ENCODE measurements at regions of chr14 and their contacts with region 1.

Region 1: DNA sequence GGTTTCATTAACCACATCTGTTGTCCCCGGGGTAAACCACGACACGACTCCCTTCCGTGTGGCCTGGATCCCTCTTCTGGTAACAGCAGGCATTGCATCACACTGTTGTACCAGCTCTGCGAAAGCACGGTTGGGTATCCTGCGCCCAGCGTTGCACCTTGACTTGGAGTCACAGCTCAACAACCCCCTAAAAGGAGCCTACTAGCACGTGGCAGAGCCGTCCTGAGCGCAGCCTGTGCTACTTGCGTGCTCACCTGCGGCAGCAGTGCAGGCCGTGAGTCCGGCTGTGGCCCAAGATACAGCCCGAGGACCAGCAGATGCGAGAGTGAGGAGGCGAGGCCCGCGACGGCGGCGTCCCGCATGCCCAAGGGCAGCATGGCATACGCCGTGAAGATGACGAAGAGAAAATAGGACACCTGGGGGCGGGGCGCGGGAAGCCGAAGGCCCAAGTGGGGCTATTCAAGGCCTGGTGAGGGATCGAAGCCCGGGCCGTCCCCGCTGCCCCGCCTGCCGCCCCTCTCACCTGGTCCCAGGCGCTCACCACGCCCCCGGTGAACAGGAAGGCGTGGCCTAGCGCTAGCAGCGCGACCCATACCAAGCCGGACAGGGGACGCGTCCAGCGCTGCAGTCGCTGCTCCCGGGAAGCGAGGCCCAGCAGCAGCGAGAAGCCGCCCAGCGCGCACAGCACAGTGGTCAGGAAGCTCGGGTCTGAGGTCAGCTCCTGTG is 2.4 kb downstream of the ADCY4 start:
- DNase-seq: peak; percentile 92
- H3K4me3 Mint-ChIP-seq: peak overlapping the region; percentile 30
- H3K27ac Mint-ChIP-seq: peak overlapping the region; percentile 74
- H3K4me1 Mint-ChIP-seq: peaks cover 64% of the 10 kb centered on the region
- H3K27me3 Mint-ChIP-seq: peaks cover 38% of the 10 kb centered on the region

Region 2: GRCh38 chr14:24092110-24092504 is 240.3 kb before region 1 on chr14:
- CTCF ChIA-PET with region 1: no interaction called
- POLR2A ChIA-PET with region 1: no interaction called
- DNase-seq: no peak
- H3K4me3 Mint-ChIP-seq: no peak overlapping the region
- H3K27ac Mint-ChIP-seq: peak overlapping the region; percentile 76
- H3K4me1 Mint-ChIP-seq: peaks cover 35% of the 10 kb centered on the region
- H3K27me3 Mint-ChIP-seq: no peaks in the 10 kb centered on the region

Region 3: GRCh38 chr14:24317141-24317928 is 15.1 kb before region 1 on chr14:
- CTCF ChIA-PET with region 1: interaction called, 136 read pairs
- POLR2A ChIA-PET with region 1: no interaction called
- DNase-seq: no peak
- H3K4me3 Mint-ChIP-seq: no peak overlapping the region
- H3K27ac Mint-ChIP-seq: no peak overlapping the region
- H3K4me1 Mint-ChIP-seq: peaks cover 43% of the 10 kb centered on the region
- H3K27me3 Mint-ChIP-seq: peaks cover 8% of the 10 kb centered on the region

Region 4: GRCh38 chr14:24351517-24351916 is 19.1 kb after region 1 on chr14:
- CTCF ChIA-PET with region 1: interaction called, 25 read pairs
- POLR2A ChIA-PET with region 1: no interaction called
- DNase-seq: no peak
- H3K4me3 Mint-ChIP-seq: no peak overlapping the region
- H3K27ac Mint-ChIP-seq: no peak overlapping the region
- H3K4me1 Mint-ChIP-seq: no peaks in the 10 kb centered on the region
- H3K27me3 Mint-ChIP-seq: peaks cover 55% of the 10 kb centered on the region

Region 5: DNA sequence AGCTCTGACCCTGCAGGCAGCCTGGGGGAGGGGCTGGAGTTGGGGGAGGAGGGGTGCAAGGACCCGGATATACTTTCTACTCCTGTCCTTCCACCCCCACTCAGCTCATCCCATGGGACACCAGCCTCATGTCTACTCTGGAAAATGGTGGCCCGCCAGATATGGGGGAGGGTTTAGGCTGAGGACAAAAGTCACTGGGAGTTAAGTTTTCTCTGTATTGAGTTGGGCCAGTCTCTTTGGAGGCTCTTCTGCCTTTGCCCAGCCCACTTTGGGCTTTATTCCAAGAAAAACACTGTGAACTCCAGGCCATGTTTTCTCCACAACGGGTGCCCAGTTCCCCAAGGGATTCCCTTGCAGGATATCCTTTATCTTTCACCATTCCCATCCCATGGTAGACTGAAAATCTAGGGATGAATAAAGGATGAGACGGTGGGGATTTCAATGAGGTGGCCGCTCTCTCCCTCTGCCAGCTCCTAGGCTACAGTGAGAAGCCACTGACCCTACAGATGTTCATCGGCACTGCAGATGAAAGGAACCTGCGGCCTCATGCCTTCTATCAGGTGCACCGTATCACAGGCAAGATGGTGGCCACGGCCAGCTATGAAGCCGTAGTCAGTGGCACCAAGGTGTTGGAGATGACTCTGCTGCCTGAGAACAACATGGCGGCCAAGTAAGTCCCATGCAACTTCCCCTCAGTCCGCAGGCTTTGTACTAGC is 40.4 kb after region 1 on chr14:
- CTCF ChIA-PET with region 1: interaction called, 13 read pairs
- POLR2A ChIA-PET with region 1: no interaction called
- DNase-seq: no peak
- H3K4me3 Mint-ChIP-seq: no peak overlapping the region
- H3K27ac Mint-ChIP-seq: no peak overlapping the region
- H3K4me1 Mint-ChIP-seq: peaks cover 4% of the 10 kb centered on the region
- H3K27me3 Mint-ChIP-seq: peaks cover 14% of the 10 kb centered on the region

Region 6: GRCh38 chr14:24425704-24426103 is 93.3 kb after region 1 on chr14:
- CTCF ChIA-PET with region 1: interaction called, 108 read pairs
- POLR2A ChIA-PET with region 1: interaction called, 18 read pairs
- DNase-seq: no peak
- H3K4me3 Mint-ChIP-seq: no peak overlapping the region
- H3K27ac Mint-ChIP-seq: peak overlapping the region; percentile 82
- H3K4me1 Mint-ChIP-seq: peaks cover 38% of the 10 kb centered on the region
- H3K27me3 Mint-ChIP-seq: peaks cover 4% of the 10 kb centered on the region

Region 7: GRCh38 chr14:24595073-24595808 is 262.8 kb after region 1 on chr14:
- CTCF ChIA-PET with region 1: no interaction called
- POLR2A ChIA-PET with region 1: no interaction called
- DNase-seq: no peak
- H3K4me3 Mint-ChIP-seq: no peak overlapping the region
- H3K27ac Mint-ChIP-seq: no peak overlapping the region
- H3K4me1 Mint-ChIP-seq: peaks cover 11% of the 10 kb centered on the region
- H3K27me3 Mint-ChIP-seq: peaks cover 22% of the 10 kb centered on the region